Aorta (tissue), 5 donors: ENCODE measurements at regions of chr6 and their contacts with region 1.

Region 1: GRCh38 chr6:157667211-157668008 is 155.6 kb upstream of the SNX9 start:
- DNase-seq: peak in 1 of 2 donors; percentile 16
- ATAC-seq: no peak
- H3K4me3 ChIP-seq: no peak overlapping the region
- H3K27ac ChIP-seq: no peak overlapping the region
- H3K4me1 ChIP-seq: no peaks in the 10 kb centered on the region
- H3K27me3 ChIP-seq: no peaks in the 10 kb centered on the region

Region 2: GRCh38 chr6:157873735-157874344 is 206.4 kb after region 1 on chr6:
- intact Hi-C with region 1: loop called in 1 of 2 experiments (anchors 5 kb)
- DNase-seq: peak; percentile 81 to 93
- ATAC-seq: peak; percentile 76
- H3K4me3 ChIP-seq: no peak overlapping the region
- H3K27ac ChIP-seq: no peak overlapping the region
- H3K4me1 ChIP-seq: no peaks in the 10 kb centered on the region
- H3K27me3 ChIP-seq: no peaks in the 10 kb centered on the region